ENCODE measurements at regions of chr10 and their contacts with region 1.

Region 1: GRCh38 chr10:7687228-7687907 is 15.7 kb upstream of the ITIH2 start:
- DNase-seq: peak; percentile 92
- H3K4me3 Mint-ChIP-seq: no peak overlapping the region
- H3K27ac Mint-ChIP-seq: no peak overlapping the region
- H3K4me1 Mint-ChIP-seq: peaks cover 10% of the 10 kb centered on the region
- H3K27me3 Mint-ChIP-seq: no peaks in the 10 kb centered on the region

Region 2: DNA sequence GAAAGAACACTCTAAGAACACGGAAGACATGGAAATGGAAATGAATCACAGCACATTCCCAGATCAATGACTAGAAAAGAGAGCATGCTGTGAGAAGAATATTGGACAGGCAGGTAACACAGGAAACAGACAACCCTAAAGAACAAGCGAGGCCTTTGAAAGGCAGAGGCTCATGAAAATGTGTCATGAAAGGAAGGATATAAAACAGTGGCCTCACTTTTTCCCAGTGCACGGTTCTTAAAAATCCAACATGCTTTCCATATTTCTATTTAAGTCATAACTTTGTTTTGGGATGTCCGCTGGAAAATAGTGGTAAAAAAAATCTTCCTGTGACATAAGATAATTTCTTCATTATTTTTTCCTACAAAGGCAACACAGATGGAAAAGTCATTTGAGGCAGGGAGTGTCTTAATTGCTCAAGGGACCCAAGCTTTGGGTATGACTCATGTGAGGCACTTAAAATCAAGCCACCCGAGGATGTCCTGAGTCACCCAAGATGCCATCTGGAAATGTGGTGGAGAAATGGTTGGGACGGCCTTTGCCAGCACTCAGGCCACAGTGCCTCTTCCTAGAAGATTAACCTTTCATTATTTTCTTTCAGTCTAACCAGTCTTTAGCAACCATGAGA is 37.6 kb before region 1 on chr10:
- CTCF ChIA-PET with region 1: no interaction called
- intact Hi-C with region 1: no loop called
- DNase-seq: no peak
- H3K4me3 Mint-ChIP-seq: no peak overlapping the region
- H3K27ac Mint-ChIP-seq: no peak overlapping the region
- H3K4me1 Mint-ChIP-seq: peaks cover 2% of the 10 kb centered on the region
- H3K27me3 Mint-ChIP-seq: peaks cover 8% of the 10 kb centered on the region

Region 3: GRCh38 chr10:7700577-7701125 is 13.3 kb after region 1 on chr10:
- CTCF ChIA-PET with region 1: interaction called, 21 read pairs
- intact Hi-C with region 1: no loop called
- DNase-seq: no peak
- H3K4me3 Mint-ChIP-seq: no peak overlapping the region
- H3K27ac Mint-ChIP-seq: no peak overlapping the region
- H3K4me1 Mint-ChIP-seq: no peaks in the 10 kb centered on the region
- H3K27me3 Mint-ChIP-seq: peaks cover 22% of the 10 kb centered on the region